HCT116 (cell line): ENCODE measurements at regions of chr7 and their contacts with region 1.

Region 1: DNA sequence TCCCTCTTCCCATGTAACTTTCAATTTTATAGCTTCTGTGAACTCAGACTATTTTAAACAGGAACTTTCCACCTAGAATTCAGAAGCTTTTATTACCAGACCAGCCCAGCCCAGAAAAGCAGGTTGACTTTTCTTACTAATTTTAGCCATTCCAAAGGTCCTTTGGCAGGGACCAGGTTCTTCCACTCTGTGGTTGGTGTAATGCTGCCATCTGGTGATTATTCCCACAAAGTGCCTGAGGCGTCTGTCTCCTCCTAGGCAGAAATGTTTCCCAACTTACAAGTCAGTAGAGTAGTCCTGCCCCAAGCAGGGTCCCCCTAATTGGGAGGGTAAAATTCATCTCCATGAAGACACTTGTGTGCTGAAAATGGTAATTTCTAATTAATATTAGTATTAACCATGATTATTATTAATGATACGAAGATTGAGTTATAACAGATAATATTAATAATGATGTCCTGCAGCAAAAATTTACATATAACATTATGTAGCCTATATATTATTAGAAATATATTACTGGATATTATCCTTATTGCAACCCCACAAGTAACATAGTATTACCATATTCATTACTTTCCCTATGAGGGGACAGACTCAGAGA is 53.0 kb upstream of the PPP1R17 start:
- DNase-seq: peak; percentile 34
- ATAC-seq: peak; percentile 83
- H3K4me3 ChIP-seq: no peak overlapping the region
- H3K27ac ChIP-seq: no peak overlapping the region
- H3K4me1 ChIP-seq: no peaks in the 10 kb centered on the region
- H3K27me3 ChIP-seq: no peaks in the 10 kb centered on the region
- CTCF ChIP-seq: peak; percentile 58 to 62 (median 62)
- POLR2A ChIP-seq: no peak
- RAD21 ChIP-seq: peak; percentile 81

Region 2: GRCh38 chr7:30983042-30983913 is 650.7 kb before region 1 on chr7:
- CTCF ChIA-PET with region 1: no interaction called
- POLR2A ChIA-PET with region 1: no interaction called
- RAD21 ChIA-PET with region 1: no interaction called
- intact Hi-C with region 1: loop called (anchors 5 kb)
- DNase-seq: peak; percentile 70
- ATAC-seq: peak; percentile 98
- H3K4me3 ChIP-seq: no peak overlapping the region
- H3K27ac ChIP-seq: no peak overlapping the region
- H3K4me1 ChIP-seq: peaks cover 7 to 10% of the 10 kb centered on the region in 2 experiments; a peak in 3 of 4 replicates
- H3K27me3 ChIP-seq: peaks cover 14% of the 10 kb centered on the region
- CTCF ChIP-seq: peak; percentile 82 to 95 (median 90)
- POLR2A ChIP-seq: no peak
- RAD21 ChIP-seq: peak; percentile 94

Region 3: DNA sequence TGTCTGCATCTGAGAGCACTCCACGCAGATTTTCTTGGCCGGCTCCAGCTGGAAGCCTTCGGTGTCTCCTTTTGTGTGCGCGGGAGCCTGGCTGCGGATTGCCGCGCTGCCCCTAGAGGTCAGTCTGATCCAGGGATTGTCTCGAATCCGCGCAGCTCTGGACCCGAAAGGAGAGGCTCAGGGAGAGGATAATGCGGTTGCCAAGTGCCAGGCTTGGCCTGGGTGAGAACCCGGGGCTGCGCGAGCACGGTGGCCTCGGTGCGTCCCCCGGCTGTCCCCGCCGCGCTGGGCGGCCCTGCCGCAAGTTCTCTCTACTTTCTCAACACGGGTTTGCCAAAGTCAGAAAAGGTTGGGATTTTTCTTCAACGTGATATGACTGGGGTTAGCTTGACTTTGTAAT is 441.0 kb before region 1 on chr7:
- CTCF ChIA-PET with region 1: interaction called, 3 read pairs
- POLR2A ChIA-PET with region 1: no interaction called
- RAD21 ChIA-PET with region 1: no interaction called
- intact Hi-C with region 1: loop called (anchors 1 kb)
- DNase-seq: peak; percentile 36
- ATAC-seq: peak; percentile 99
- H3K4me3 ChIP-seq: no peak overlapping the region
- H3K27ac ChIP-seq: no peak overlapping the region
- H3K4me1 ChIP-seq: no peaks in the 10 kb centered on the region
- H3K27me3 ChIP-seq: peaks cover 5% of the 10 kb centered on the region; the same call in 1 of the 2 replicates
- CTCF ChIP-seq: peak; percentile 48 to 91 (median 87); a peak in 5 of 6 replicates
- POLR2A ChIP-seq: no peak
- RAD21 ChIP-seq: peak; percentile 85

Region 4: DNA sequence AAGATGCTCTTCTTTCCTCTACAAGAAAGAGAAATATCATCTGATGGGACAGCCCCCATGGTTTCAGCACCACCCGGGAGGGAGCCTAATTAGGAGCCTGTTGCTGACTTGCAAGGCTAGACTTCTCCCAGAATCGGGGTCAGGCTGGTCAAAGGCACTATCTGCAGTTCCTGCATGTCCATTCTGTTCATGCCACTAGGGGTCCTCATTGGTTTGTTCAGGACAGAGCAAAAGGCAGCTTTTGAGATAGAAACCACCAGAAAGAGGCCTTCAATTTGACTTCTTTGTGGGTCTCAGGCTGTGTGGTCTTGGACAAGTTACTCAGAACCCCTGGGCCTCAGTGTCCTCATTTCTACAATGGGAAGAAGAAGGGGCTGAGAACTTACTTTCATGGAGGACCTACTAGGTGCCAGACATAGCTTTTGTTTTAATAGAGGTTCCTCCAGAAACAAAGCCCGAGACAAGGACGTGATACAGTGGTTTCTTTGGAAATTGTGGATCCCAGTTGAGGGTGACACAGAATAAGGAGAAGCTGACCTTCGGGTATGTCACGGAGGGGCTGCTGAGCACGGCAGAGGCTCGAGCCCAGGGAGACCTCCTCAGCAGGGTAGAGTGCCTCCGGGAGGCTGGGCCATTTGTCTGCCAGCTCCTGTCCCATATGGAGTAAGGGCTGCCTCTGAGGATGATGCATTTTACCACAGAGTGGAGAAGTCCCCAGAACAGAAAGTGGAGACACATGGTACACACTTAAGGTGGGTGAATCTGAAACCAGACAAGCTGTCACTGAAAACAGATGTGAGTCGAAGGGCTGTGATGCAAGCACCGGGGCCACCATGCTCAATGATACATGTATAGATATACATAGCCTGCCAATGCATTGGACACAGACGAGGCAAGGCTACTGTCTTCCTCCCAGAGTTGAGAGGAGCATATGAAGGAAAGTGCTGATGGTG is 260.4 kb before region 1 on chr7:
- CTCF ChIA-PET with region 1: interaction called, 6 read pairs
- POLR2A ChIA-PET with region 1: no interaction called
- RAD21 ChIA-PET with region 1: no interaction called
- intact Hi-C with region 1: loop called (anchors 2 kb)
- DNase-seq: peak; percentile 51
- ATAC-seq: peak; percentile 89
- H3K4me3 ChIP-seq: no peak overlapping the region
- H3K27ac ChIP-seq: no peak overlapping the region
- H3K4me1 ChIP-seq: no peaks in the 10 kb centered on the region
- H3K27me3 ChIP-seq: peaks cover 38% of the 10 kb centered on the region
- CTCF ChIP-seq: peak; percentile 45 to 76 (median 72); a peak in 5 of 6 replicates
- POLR2A ChIP-seq: no peak
- RAD21 ChIP-seq: peak; percentile 70